MCF 10A (cell line): ENCODE measurements at regions of chr20 and their contacts with region 1.

Region 1: DNA sequence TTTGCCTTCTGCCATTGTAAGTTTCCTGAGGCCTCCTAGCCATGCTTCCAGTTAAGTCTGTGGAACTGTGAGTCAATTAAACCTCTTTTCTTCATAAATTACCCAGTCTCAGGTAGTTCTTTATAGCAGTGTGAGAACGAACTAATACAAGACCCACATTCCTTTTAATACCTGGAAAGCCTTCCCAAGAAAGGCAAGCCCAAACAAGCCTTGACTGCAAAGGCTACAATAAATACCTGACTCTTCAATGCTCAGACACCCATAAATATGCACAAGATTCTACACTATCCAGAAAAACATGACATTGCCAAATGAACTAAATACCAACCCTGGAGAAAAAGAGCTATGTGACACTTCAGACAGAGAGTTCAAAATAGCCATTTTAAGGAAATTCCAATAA is 338.8 kb downstream of the HAO1 start:
- DNase-seq: peak; percentile 50
- H3K4me3 Mint-ChIP-seq: no peak overlapping the region
- H3K27ac Mint-ChIP-seq: peak overlapping the region; percentile 61
- H3K4me1 Mint-ChIP-seq: peaks cover 21% of the 10 kb centered on the region
- H3K27me3 Mint-ChIP-seq: no peaks in the 10 kb centered on the region
- CTCF ChIP-seq: no peak

Region 2: GRCh38 chr20:7585126-7585679 is 16.2 kb before region 1 on chr20:
- CTCF ChIA-PET with region 1: interaction called, 3 read pairs
- POLR2A ChIA-PET with region 1: interaction called, 13 read pairs
- intact Hi-C with region 1: no loop called
- DNase-seq: peak; percentile 67
- H3K4me3 Mint-ChIP-seq: no peak overlapping the region
- H3K27ac Mint-ChIP-seq: no peak overlapping the region
- H3K4me1 Mint-ChIP-seq: peaks cover 10% of the 10 kb centered on the region
- H3K27me3 Mint-ChIP-seq: no peaks in the 10 kb centered on the region
- CTCF ChIP-seq: no peak